ENCODE measurements at regions of chr5 and their contacts with region 1.

Region 1: GRCh38 chr5:115455301-115455707 is 89.3 kb downstream of the FEM1C start:
- DNase-seq: no peak
- ATAC-seq: peak; percentile 51

Region 2: GRCh38 chr5:115321309-115321708 is 134.0 kb before region 1 on chr5:
- intact Hi-C with region 1: no loop called
- DNase-seq: no peak
- ATAC-seq: no peak

Region 3: GRCh38 chr5:115432691-115433090 is 22.6 kb before region 1 on chr5:
- intact Hi-C with region 1: loop called (anchors 2 kb)
- DNase-seq: no peak
- ATAC-seq: no peak

Measured in Right ventricle myocardium inferior (tissue), 1 donor.